Activated T-helper 1 cell treated with anti-CD3 and anti-CD28 coated beads, Interleukin-12 subunit alpha, Interleukin-12 subunit beta, Interleukin-2, Interleukin-4 antibody, amounts not matched to agents 30 ng/mL and 10 ng/mL and 1 ng/mL, durations not matched to agents 14 hours and 24 hours and 36 hours (primary cell): ENCODE measurements at regions of chr18 and their contacts with region 1.

Region 1: GRCh38 chr18:56709463-56709862 is 58.3 kb downstream of the WDR7 start:
- DNase-seq: peak; percentile 41
- H3K4me3 Mint-ChIP-seq: no peak overlapping the region
- H3K27ac Mint-ChIP-seq: no peak overlapping the region
- H3K4me1 Mint-ChIP-seq: peaks cover 28% of the 10 kb centered on the region
- H3K27me3 Mint-ChIP-seq: no peaks in the 10 kb centered on the region

Region 2: GRCh38 chr18:56112013-56112749 is 597.3 kb before region 1 on chr18:
- intact Hi-C with region 1: loop called (anchors 10 kb)
- DNase-seq: peak; percentile 1
- H3K4me3 Mint-ChIP-seq: no peak overlapping the region
- H3K27ac Mint-ChIP-seq: peak overlapping the region; percentile 20
- H3K4me1 Mint-ChIP-seq: peaks cover 13% of the 10 kb centered on the region
- H3K27me3 Mint-ChIP-seq: peaks cover 4% of the 10 kb centered on the region

Region 3: DNA sequence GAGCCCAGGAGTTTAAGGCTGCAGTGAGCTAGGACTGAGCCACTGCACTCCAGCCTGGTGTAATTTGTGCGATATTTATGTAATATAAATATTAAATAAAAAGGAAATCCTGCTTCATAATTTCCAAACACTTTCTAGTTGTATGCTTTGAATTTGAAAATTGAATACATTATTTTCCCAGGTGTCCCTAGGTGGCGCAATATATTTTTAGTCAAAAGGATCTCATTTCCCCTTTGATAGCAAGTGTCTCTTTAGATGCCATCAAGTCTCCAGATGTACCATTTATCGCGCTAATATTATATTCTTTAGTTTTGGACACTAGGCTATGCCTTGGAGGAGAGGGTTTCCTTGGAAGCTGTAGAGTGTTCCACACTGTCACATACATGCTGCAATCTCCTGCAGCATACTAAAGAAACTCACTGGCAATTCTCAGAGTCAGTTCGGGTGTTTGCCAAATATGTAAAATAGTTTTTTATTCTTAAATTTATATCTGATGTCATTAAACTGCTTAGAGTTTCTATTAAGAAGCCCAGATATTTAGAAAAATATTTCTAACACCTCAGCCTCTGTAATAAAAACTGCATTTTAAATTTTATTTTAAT is 63.9 kb before region 1 on chr18:
- intact Hi-C with region 1: loop called (anchors 1 kb)
- DNase-seq: no peak
- H3K4me3 Mint-ChIP-seq: no peak overlapping the region
- H3K27ac Mint-ChIP-seq: no peak overlapping the region
- H3K4me1 Mint-ChIP-seq: peaks cover 33% of the 10 kb centered on the region
- H3K27me3 Mint-ChIP-seq: no peaks in the 10 kb centered on the region

Region 4: GRCh38 chr18:56672391-56672790 is 37.1 kb before region 1 on chr18:
- intact Hi-C with region 1: loop called (anchors 2 kb)
- DNase-seq: no peak
- H3K4me3 Mint-ChIP-seq: no peak overlapping the region
- H3K27ac Mint-ChIP-seq: no peak overlapping the region
- H3K4me1 Mint-ChIP-seq: peaks cover 19% of the 10 kb centered on the region
- H3K27me3 Mint-ChIP-seq: no peaks in the 10 kb centered on the region